Natural killer cell (primary cell): ENCODE measurements at regions of chr20 and their contacts with region 1.

Region 1: GRCh38 chr20:54062812-54063280 is 7.5 kb downstream of the BCAS1 start:
- DNase-seq: peak in 1 of 2 donors; percentile 60
- ATAC-seq: no peak
- H3K4me3 ChIP-seq: no peak overlapping the region
- H3K4me3 Mint-ChIP-seq: no peak overlapping the region
- H3K27ac ChIP-seq: no peak overlapping the region
- H3K27ac Mint-ChIP-seq: no peak overlapping the region
- H3K4me1 ChIP-seq: peaks cover 15% of the 10 kb centered on the region
- H3K4me1 Mint-ChIP-seq: peaks cover 16 to 20% of the 10 kb centered on the region in 2 donors
- H3K27me3 ChIP-seq: no peaks in the 10 kb centered on the region
- H3K27me3 Mint-ChIP-seq: no peaks in the 10 kb centered on the region
- CTCF ChIP-seq: peak; percentile 48

Region 2: GRCh38 chr20:53157443-53158408 is 905.1 kb before region 1 on chr20:
- intact Hi-C with region 1: loop called (anchors 1 kb)
- DNase-seq: peak; percentile 27 to 61
- ATAC-seq: peak in 1 of 3 donors; percentile 44
- H3K4me3 ChIP-seq: no peak overlapping the region
- H3K4me3 Mint-ChIP-seq: no peak overlapping the region
- H3K27ac ChIP-seq: no peak overlapping the region
- H3K27ac Mint-ChIP-seq: no peak overlapping the region
- H3K4me1 ChIP-seq: no peaks in the 10 kb centered on the region
- H3K4me1 Mint-ChIP-seq: no peaks in the 10 kb centered on the region
- H3K27me3 ChIP-seq: no peaks in the 10 kb centered on the region
- H3K27me3 Mint-ChIP-seq: peaks cover 12 to 34% of the 10 kb centered on the region in 2 donors
- CTCF ChIP-seq: peak; percentile 57

Region 3: DNA sequence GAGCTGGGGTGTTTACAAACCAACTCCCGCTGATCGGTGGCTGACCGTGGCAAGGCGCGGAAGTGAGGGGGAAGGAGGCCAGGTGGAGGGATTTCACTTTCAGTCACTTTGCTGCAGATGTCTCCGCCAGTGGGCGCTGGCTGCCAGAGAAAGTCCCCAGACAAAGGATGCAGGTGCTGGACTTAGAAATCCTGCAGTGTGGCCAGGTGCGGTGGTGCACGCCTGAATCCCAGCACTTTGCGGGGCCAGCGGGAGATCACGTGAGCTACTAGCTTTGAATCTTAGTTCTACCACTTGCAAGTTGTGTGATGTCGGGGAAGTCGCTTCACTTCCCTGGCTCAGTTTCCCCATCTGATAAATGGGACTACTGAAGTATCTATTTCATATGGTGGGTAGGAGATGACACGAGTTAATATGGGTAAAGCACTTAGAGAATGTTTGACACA is 649.6 kb before region 1 on chr20:
- intact Hi-C with region 1: loop called (anchors 1 kb)
- DNase-seq: peak; percentile 23 to 67
- ATAC-seq: peak in 1 of 3 donors; percentile 58
- H3K4me3 ChIP-seq: no peak overlapping the region
- H3K4me3 Mint-ChIP-seq: no peak overlapping the region
- H3K27ac ChIP-seq: no peak overlapping the region
- H3K27ac Mint-ChIP-seq: no peak overlapping the region
- H3K4me1 ChIP-seq: peaks cover 6% of the 10 kb centered on the region
- H3K4me1 Mint-ChIP-seq: peaks cover 0 to 6% of the 10 kb centered on the region in 2 donors
- H3K27me3 ChIP-seq: no peaks in the 10 kb centered on the region
- H3K27me3 Mint-ChIP-seq: peaks cover 2 to 4% of the 10 kb centered on the region in 2 donors
- CTCF ChIP-seq: peak; percentile 42